ENCODE measurements at regions of chrX and their contacts with region 1.

Region 1: DNA sequence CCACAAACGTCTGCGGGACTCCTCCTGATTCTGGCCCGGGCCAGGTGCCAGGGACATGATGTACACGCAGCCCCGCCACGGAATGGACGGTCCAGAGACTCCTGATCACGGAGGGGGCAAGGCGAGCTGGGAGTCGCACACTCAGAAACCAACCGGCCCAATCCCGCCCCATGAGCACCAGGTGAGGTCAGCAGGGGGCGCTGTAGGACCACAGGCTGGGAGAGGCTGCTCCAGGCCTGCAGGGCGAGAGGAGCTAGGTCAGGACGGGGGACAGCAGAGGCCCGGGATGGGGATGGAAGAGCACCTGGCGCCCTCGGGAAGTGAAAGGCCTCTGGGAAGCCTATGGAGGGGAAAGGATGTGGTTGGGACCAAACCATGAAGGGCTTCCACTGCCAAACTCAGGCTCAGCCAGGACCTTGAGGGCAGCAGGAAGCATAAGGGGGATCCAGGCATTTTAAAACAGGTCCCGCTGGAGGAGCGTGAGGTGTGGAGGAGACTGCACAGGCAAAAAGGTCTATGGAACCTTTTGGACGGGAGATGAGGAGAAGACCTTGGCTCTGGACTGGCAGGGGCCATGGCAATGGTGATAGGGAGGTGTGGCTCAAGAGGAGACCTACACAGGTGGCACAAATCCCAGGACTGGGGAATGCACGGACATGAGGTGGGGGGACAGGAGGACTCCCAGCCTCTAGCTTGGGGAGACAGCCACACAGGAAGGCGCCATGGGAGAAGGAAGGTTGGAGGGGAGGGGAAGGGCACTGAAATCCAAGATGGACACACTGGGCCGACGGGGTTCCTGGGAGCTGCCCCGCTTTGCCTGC is 79.2 kb downstream of the MTMR1 start:
- DNase-seq: peak; percentile 81
- H3K4me3 Mint-ChIP-seq: no peak overlapping the region
- H3K27ac Mint-ChIP-seq: no peak overlapping the region
- H3K4me1 Mint-ChIP-seq: peaks cover 7% of the 10 kb centered on the region
- H3K27me3 Mint-ChIP-seq: no peaks in the 10 kb centered on the region

Region 2: GRCh38 chrX:150898343-150899190 is 126.2 kb after region 1 on chrX and contains the start of gene CD99L2:
- CTCF ChIA-PET with region 1: interaction called, 5 read pairs
- POLR2A ChIA-PET with region 1: no interaction called
- intact Hi-C with region 1: loop called (anchors 10 kb)
- DNase-seq: peak; percentile 93
- H3K4me3 Mint-ChIP-seq: peak within 1 kb of the TSS; percentile 77
- H3K27ac Mint-ChIP-seq: peak within 1 kb of the TSS; percentile 49
- H3K4me1 Mint-ChIP-seq: peaks cover 13% of the 10 kb centered on the region
- H3K27me3 Mint-ChIP-seq: no peaks in the 10 kb centered on the region
- total RNA-seq, gene CD99L2: 14.9 to 15.7 TPM

Region 3: GRCh38 chrX:151004082-151004481 is 231.7 kb after region 1 on chrX:
- CTCF ChIA-PET with region 1: interaction called, 10 read pairs
- POLR2A ChIA-PET with region 1: no interaction called
- intact Hi-C with region 1: loop called (anchors 1 kb)
- DNase-seq: no peak
- H3K4me3 Mint-ChIP-seq: no peak overlapping the region
- H3K27ac Mint-ChIP-seq: no peak overlapping the region
- H3K4me1 Mint-ChIP-seq: no peaks in the 10 kb centered on the region
- H3K27me3 Mint-ChIP-seq: no peaks in the 10 kb centered on the region

Region 4: DNA sequence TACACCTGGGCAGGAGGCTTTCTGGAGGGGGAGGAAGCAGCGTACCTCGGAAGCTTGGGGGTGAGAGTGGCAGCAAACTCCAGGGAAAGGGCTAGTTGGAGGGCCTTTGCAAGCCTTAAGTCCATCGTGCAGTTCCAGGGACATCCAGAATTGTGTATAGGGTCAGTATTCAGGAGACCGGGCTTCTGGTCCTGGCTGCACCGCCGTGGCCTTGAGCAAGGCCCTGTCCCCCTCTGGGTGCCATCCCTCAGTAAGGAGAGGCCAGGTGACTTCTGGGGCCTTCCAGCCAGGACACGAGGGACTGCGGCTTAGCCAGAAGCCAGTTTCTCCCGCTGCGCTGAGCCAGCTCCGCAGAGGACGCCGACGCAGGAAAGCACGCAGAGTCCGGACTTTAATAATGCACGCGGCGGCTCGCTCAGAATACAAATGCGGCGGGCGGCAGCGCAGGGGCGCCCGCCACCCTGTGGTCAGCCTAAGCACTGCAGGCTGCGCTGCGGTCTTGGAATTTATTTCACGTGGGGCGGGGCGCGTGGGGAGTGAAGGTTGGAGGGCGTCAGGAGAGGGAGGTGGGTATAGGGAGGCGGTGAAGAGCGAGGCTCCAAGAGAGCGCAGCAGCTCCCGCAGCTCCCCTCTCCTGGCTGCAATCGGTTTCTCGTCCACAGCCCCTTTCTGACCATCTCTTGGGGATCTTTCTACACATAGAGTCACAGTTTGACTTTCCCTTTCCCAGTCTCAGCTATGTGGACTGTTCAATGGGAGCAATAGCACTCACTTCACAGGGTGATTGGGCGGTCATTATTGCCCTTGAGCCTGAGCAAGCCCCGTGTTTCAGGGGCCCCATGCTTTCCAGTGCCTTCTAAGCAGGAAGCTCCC is 310.0 kb after region 1 on chrX:
- CTCF ChIA-PET with region 1: interaction called, 120 read pairs
- POLR2A ChIA-PET with region 1: interaction called, 6 read pairs
- intact Hi-C with region 1: loop called (anchors 1 kb)
- DNase-seq: peak; percentile 68
- H3K4me3 Mint-ChIP-seq: no peak overlapping the region
- H3K27ac Mint-ChIP-seq: no peak overlapping the region
- H3K4me1 Mint-ChIP-seq: peaks cover 2% of the 10 kb centered on the region
- H3K27me3 Mint-ChIP-seq: peaks cover 10% of the 10 kb centered on the region